ENCODE measurements at regions of chr3 and their contacts with region 1.

Region 1: DNA sequence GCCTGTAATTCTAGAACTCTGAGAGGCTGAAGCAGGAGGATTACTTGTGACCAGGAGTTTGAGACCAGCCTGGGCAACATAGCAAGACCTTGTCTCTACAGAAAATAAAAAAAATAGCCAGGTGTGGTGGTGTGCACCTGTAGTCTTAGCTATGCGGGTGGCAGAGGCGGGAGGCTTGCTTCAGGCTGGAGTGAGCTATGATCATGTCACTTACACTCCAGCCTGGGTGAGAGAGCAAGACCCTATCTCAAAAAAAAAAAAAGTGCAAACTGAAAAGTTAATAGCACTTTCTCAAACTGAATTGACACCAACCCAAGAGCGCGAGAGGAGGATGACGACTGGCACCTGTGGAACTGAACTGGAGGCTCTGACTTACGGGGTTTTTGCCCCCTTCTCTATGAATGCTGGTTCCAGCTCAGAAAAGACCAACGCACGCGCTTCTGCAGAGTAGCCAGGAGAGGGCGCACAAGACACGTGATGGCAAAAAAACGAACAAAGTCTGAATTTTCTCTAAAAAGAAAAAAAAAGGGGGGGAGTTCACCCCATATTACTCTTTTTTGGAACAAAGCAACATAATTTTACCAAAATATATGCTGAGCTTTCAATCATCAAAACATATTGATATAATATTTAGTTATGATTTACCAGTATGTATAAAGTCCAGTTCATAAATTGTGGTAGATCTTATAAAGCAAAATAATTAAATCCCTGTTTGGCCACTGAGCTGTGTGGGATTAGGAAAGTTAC is 23.7 kb downstream of the CFAP92 start:
- DNase-seq: no peak
- H3K4me3 ChIP-seq: no peak overlapping the region
- CTCF ChIP-seq: peak; percentile 80

Region 2: DNA sequence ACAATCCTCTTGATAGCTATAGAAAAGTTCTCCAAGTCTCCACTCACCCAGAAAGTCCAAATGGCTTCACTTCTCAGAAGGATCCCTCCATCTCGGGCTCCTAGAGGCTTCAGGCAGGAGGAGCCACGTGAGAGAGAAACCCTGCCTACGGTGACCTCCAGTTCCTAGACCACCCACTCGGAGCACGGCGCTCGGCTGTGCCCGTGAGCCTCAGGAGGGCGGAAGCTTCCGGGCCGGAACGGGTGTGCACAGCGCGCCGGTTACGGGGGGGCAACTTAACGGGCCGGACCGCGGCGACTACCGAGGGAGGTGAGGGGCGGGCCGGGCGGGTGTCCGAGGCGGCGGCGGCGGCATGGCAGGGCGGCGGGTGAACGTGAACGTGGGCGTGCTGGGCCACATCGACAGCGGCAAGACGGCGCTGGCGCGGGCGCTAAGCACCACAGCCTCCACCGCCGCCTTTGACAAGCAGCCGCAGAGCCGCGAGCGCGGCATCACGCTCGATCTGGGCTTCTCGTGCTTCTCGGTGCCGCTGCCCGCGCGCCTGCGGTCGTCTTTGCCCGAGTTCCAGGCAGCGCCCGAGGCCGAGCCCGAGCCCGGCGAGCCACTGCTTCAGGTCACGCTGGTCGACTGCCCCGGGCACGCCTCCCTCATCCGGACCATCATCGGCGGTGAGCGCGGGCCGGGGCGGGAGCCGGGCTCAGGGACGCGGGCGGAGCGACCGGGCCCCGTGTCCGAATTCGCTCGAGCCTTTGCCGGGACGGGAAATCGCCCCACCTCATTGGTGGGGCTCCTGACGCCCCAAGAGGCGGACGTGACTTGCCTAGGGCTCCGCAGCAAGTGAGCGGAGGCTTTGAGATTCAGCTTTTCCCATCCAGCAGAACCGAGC is 816.8 kb before region 1 on chr3 and contains the start of gene EEFSEC:
- CTCF ChIA-PET with region 1: no interaction called
- POLR2A ChIA-PET with region 1: no interaction called
- DNase-seq: no peak
- H3K4me3 ChIP-seq: peak within 1 kb of the TSS; percentile 73
- CTCF ChIP-seq: no peak

Region 3: DNA sequence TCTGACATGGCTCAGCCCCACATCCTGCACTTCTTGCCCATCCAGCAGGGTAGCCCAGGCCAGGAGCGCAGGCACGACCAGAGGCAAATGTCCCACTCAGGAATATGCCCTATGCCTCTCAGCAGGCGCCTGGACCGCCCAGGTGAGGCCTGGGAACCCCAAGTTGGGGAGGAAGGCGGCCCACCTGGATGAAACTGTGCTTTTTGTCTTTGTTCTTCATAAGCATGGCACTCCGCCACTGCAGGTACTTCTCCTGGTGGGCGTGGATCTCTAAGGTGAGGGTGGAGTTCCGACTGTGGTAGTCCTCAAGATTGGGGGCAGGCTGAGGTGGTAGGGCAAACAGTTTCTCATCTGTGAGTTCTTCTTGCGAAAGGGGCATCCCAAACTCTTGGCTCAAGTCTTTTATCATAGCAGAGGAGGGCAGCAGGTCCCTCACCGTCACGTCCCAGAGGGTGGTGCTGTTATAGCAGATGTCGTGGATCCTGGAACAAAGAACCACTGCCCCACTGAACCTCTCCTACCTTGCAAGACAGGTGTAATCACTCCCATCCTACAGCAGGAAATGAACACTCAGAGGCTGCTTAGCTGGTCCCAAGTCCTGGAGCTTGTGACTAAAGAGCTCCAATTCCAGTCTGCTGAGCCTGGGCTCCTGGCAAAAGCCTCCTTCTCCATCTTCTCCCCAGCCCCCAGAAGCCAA is 37.5 kb before region 1 on chr3:
- CTCF ChIA-PET with region 1: interaction called, 11 read pairs
- POLR2A ChIA-PET with region 1: no interaction called
- DNase-seq: no peak
- H3K4me3 ChIP-seq: no peak overlapping the region
- CTCF ChIP-seq: no peak

Region 4: DNA sequence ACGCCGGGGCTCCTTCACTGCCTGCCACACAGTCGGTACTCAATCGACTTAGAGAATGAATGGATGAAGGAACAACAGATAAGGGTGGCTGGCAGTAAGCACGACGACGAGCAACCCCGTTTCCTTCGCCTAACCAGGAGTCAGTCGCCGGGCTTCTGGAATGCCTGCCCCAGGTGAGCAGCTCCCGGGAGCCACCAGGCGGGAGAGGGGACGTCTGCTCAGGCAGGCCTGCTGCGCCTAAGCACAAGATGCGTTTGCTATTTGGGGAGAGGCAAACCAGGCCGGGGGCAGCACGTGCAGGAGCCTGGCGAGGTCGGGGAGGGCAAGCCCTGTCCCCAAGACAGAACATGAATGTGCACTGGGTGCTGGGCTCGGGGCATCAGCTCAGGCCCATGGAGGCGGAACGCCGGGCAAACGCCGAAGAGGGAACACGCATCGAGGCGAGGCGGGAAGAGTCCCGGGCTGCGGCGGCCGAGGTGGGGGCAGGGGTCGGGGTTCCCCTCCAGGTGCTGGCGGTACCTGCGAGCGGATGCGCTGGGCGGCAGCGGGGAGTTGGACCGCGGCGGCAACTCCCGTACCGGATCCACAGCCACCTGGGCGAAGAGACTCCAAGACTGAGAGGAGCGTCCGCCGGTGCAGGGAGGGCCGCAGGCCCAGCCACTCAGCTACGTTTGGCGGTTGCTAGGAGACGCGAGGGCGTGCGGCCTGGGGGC is 23.5 kb after region 1 on chr3 and contains the start of gene CFAP92:
- CTCF ChIA-PET with region 1: interaction called, 97 read pairs
- POLR2A ChIA-PET with region 1: no interaction called
- DNase-seq: no peak
- H3K4me3 ChIP-seq: peak within 1 kb of the TSS; percentile 45
- CTCF ChIP-seq: no peak

Region 5: GRCh38 chr3:129112308-129113052 is 142.3 kb after region 1 on chr3:
- CTCF ChIA-PET with region 1: interaction called, 52 read pairs
- POLR2A ChIA-PET with region 1: no interaction called
- DNase-seq: no peak
- H3K4me3 ChIP-seq: no peak overlapping the region
- CTCF ChIP-seq: no peak

Region 6: DNA sequence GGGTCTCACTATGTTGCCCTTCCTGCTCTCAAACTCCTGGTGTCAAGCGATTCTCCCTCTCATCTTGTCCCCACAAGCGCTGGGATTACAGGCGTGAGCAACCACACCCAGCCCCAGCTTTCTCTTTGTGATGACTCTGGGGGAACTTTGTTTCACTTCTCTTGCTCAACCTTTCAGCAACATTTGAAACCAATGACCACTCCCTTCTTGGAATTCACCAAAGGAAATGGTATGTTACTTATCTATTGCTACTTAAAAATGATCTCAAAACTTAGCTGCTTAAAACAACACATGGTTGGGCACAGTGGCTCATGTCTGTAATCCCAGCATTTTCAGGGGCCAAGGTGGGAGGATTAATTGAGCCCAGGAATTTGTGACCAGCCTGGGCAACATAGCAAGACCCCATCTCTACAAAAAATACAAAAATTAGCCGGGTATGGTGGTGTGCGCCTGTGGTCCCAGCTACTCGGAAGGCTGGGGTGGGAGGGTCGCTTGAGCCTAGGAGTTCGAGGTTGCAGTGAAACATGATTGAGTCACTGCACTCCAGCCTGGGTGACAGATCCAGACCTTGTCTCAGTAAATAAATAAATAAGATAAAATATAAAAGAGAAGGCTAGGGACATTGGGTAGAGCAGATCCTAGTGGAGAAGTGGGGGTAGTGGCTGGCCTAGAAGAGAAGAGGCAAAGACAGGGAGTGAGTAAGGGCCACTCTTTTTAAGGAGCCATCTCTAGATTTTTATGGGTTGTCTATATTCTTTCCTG is 269.0 kb after region 1 on chr3:
- CTCF ChIA-PET with region 1: interaction called, 196 read pairs
- POLR2A ChIA-PET with region 1: no interaction called
- DNase-seq: no peak
- H3K4me3 ChIP-seq: no peak overlapping the region
- CTCF ChIP-seq: no peak

Region 7: DNA sequence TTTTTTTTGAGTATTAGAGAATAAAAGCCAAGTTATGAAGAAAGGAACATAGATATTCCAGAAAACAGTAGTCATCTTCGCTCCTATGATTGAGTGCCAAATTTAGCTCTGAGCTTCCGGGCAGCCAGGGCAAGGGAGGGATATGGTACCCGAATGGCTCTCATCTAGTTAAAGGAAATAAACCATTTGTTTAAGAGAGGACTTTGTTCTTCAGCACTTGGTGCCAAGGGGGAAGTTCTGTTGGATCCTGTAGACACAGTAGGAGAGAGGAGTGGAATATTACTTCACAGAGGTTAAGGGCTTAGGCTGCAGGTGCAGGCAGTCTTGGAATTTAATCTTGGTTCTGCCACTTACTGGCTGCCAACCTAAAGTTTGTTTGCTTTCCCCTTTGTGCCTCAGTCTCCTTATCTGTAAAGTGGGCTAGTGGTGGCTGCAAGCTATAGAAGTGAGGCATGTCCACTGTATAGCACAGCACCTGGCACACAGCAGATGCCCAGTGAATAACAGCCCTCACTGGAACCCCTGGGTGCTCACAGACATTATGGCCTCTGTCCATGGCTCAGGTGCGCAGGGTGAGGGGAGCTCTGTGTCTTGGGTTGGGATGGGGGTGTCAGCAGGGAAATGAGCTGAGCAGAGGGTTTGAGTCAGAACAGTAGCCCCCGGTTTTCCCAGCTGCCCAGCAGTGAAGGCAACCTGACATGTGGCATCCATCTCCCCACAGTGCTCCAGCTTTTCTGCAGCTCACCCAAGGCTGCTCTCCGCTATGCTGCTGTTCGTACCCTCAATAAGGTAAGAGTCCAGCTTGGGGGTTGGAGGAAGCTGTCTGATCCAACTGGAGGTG is 289.7 kb after region 1 on chr3:
- CTCF ChIA-PET with region 1: interaction called, 13 read pairs
- POLR2A ChIA-PET with region 1: no interaction called
- DNase-seq: no peak
- H3K4me3 ChIP-seq: no peak overlapping the region
- CTCF ChIP-seq: no peak

Measured in AG04449 (cell line).